Vagina (tissue), 2 donors: ENCODE measurements at regions of chr19 and their contacts with region 1.

Region 1: DNA sequence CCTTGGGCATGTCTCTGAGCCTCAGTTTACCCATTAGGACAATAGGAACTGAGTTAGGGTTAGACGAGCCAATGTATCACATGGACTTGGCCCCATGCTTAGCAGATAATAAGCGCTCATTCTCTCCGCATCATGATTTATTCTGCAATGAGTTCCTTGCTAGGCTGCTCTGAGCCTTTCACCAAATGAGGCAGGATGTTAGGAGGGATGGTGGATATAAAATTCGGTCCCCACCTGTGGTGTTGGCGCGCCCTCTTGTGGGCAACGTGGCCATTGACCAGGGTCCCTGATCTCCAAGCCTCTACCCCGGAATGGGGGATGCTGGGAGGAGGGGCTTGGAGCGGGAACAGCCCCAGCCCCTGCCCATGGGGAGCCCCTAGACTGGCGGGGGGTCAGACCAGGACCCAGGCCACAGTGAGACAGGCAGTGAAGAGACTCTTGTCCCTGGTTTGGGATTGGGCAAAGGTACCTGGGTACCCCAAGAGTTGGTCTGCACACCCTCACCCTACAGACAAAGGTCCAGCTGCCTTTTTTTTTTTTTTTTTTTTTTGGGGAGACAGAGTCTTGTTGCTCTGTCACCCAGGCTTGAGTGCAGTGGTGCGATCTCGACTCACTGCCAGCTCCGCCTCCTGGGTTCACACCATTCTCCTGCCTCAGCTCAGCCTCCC is 43.9 kb downstream of the CERS4 start:
- DNase-seq: no peak
- H3K4me3 ChIP-seq: no peak overlapping the region
- H3K27ac ChIP-seq: no peak overlapping the region
- H3K4me1 ChIP-seq: peaks cover 14% of the 10 kb centered on the region
- H3K27me3 ChIP-seq: no peaks in the 10 kb centered on the region
- CTCF ChIP-seq: peak; percentile 89 to 98 (median 94)
- POLR2A ChIP-seq: no peak

Region 2: DNA sequence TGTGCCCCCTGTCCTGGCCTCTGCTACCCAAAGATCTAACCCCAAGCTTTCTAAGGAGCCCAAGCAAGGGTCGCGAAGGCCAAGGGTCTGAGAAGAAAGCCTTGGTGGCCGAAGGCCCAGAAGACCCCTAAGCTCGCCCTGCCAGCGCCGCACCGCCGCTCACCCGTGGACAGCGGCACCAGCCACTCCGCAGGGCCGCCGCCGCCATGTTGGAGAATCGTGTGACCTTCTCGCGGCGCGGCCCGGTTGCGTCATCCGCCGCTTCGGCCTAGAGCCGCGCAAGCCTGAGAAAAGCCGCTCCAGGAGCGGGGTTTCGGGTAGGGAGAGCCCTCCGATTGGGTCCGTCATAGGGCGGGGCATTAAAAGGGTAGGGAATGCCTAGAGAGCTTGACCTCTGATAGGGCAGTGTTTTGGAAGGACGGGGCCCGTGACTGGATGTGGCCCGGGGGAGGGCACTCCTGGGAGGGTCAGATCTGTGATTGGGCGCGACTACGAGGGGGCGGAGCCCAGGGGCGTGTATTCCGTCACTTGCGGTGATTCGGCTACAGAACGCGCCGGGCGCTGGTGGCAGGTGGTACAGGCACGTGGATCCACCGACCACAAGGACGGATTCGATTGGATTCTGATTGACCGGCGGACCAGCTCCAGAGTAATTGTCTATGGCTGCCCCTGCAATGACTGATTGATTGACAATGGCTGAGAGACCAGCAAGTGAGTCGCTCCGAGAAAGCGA is 309.4 kb before region 1 on chr19 and contains the start of gene TIMM44:
- intact Hi-C with region 1: loop called (anchors 10 kb)
- DNase-seq: peak; percentile 99 to 100
- H3K4me3 ChIP-seq: peak within 1 kb of the TSS; percentile 64 to 71
- H3K27ac ChIP-seq: peak within 1 kb of the TSS; percentile 95
- H3K4me1 ChIP-seq: peaks cover 35% of the 10 kb centered on the region
- H3K27me3 ChIP-seq: no peaks in the 10 kb centered on the region
- CTCF ChIP-seq: no peak
- POLR2A ChIP-seq: peak in 1 of 2 donors; percentile 59
- total RNA-seq, gene TIMM44: 76.1 TPM

Region 3: GRCh38 chr19:8158411-8159074 is 94.5 kb before region 1 on chr19:
- intact Hi-C with region 1: loop called (anchors 5 kb)
- DNase-seq: no peak
- H3K4me3 ChIP-seq: no peak overlapping the region
- H3K27ac ChIP-seq: no peak overlapping the region
- H3K4me1 ChIP-seq: peaks cover 14% of the 10 kb centered on the region
- H3K27me3 ChIP-seq: no peaks in the 10 kb centered on the region
- CTCF ChIP-seq: peak in 2 of 3 experiments; percentile 37 to 67
- POLR2A ChIP-seq: no peak